ENCODE measurements at regions of chr4 and their contacts with region 1.

Region 1: DNA sequence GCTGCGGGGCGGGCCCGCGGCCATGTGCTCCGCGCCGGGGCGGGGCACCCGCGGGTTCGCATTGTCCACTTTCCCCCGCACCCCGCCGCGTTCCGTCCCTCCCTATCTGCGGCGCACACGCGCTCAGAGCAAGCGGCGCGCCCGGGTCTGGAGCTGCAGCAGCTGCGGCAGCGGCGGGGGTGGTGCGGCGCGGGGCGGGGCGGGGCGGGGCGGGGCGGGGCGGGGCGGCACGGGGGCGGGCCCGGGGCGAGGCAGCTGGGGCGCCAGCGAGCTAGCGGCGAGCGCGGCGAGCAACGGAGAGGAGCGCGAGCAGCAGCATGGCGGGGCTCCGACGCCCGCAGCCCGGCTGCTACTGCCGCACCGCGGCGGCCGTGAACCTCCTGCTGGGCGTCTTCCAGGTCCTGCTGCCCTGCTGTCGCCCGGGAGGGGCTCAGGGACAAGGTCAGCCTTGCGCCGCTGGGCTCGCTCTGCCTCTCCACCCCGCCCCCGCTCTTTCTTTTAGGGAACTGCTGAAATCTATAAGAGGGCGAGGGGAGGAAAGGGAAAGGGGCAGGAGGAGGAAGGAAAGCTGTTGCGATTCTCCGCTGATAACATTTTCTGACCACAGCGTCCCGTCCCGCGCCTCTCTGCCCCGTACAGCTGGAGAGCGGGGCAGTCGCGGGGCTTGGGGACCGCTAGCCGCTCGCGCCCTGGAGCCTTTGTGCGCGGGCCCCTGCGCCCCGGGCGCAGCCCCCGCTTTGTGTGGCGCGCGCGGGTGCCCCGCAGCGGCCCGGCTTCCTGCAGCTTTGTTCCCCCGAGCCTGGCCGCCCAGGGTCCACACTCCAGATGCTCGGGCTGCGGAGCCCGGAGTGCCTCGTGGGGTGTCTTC is at the start of gene TMEM131L:
- DNase-seq: peak; percentile 66 to 81 (median 73)
- H3K4me3 ChIP-seq: peak within 1 kb of the TSS; percentile 79 to 86
- H3K4me3 Mint-ChIP-seq: peak within 1 kb of the TSS; percentile 89 to 99 (median 98)
- H3K27ac ChIP-seq: peak within 1 kb of the TSS; percentile 76
- H3K27ac Mint-ChIP-seq: peak within 1 kb of the TSS; percentile 95 to 100 (median 98)
- H3K4me1 ChIP-seq: peaks cover 37% of the 10 kb centered on the region
- H3K4me1 Mint-ChIP-seq: peaks cover 30 to 60% (median 36%) of the 10 kb centered on the region in 4 donors
- H3K27me3 ChIP-seq: no peaks in the 10 kb centered on the region
- H3K27me3 Mint-ChIP-seq: no peaks in the 10 kb centered on the region
- total RNA-seq, gene TMEM131L: 62.5 to 65.6 TPM

Region 2: GRCh38 chr4:152860051-152860450 is 606.3 kb before region 1 on chr4:
- CTCF ChIA-PET with region 1: no interaction called
- POLR2A ChIA-PET with region 1: no interaction called
- intact Hi-C with region 1: no loop called
- DNase-seq: no peak
- H3K4me3 ChIP-seq: no peak overlapping the region
- H3K4me3 Mint-ChIP-seq: no peak overlapping the region
- H3K27ac ChIP-seq: no peak overlapping the region
- H3K27ac Mint-ChIP-seq: no peak overlapping the region
- H3K4me1 ChIP-seq: no peaks in the 10 kb centered on the region
- H3K4me1 Mint-ChIP-seq: peaks cover 0 to 2% (median 0%) of the 10 kb centered on the region in 4 donors
- H3K27me3 ChIP-seq: no peaks in the 10 kb centered on the region
- H3K27me3 Mint-ChIP-seq: no peaks in the 10 kb centered on the region

Region 3: GRCh38 chr4:153426207-153426885 is 40.0 kb before region 1 on chr4:
- CTCF ChIA-PET with region 1: interaction called, 100 read pairs
- POLR2A ChIA-PET with region 1: interaction called, 19 read pairs
- intact Hi-C with region 1: no loop called
- DNase-seq: peak; percentile 52 to 72 (median 65)
- H3K4me3 ChIP-seq: no peak overlapping the region
- H3K4me3 Mint-ChIP-seq: peak overlapping the region in 7 of 8 donors; percentile 13 to 74 (median 65)
- H3K27ac ChIP-seq: no peak overlapping the region
- H3K27ac Mint-ChIP-seq: peak overlapping the region; percentile 83 to 94 (median 90)
- H3K4me1 ChIP-seq: peaks cover 64% of the 10 kb centered on the region
- H3K4me1 Mint-ChIP-seq: peaks cover 29 to 51% (median 41%) of the 10 kb centered on the region in 4 donors
- H3K27me3 ChIP-seq: no peaks in the 10 kb centered on the region
- H3K27me3 Mint-ChIP-seq: no peaks in the 10 kb centered on the region

Region 4: DNA sequence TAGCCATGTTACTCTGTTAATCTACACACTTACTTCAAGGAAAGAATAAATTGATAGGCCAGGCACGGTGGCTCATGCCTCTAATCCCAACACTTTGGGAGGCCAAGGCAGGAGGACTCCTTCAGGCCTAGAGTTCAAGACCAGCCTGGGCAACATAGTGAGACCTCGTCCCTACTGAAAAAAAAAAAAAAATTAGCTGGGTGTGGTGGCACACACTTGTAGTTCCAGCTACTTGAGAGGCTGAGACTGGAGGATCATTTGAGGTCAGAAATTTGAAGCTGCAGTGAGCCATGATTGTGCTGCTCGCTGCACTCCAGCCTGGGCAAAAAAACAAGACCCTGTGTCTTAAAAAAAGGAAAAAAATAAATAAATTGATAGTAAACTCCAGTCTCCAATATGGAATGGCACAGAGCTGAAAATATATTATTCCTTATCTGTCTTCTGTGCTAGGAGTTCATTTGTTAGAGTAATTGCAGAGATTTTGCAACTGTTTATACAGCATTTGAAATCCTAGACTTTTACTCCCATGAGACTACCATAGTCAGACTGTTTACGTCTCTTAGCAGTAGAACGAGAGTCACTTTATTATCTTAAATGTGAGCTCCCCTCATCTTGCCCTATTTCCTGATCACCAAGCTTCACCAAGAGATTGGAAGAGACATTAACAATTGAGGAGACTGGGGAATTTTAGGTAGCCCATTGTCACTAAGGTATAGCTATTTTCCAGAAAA is 19.0 kb before region 1 on chr4:
- CTCF ChIA-PET with region 1: interaction called, 8 read pairs
- POLR2A ChIA-PET with region 1: interaction called, 26 read pairs
- intact Hi-C with region 1: no loop called
- DNase-seq: no peak
- H3K4me3 ChIP-seq: no peak overlapping the region
- H3K4me3 Mint-ChIP-seq: no peak overlapping the region
- H3K27ac ChIP-seq: no peak overlapping the region
- H3K27ac Mint-ChIP-seq: no peak overlapping the region
- H3K4me1 ChIP-seq: peaks cover 18% of the 10 kb centered on the region
- H3K4me1 Mint-ChIP-seq: peaks cover 12 to 23% (median 15%) of the 10 kb centered on the region in 4 donors
- H3K27me3 ChIP-seq: no peaks in the 10 kb centered on the region
- H3K27me3 Mint-ChIP-seq: no peaks in the 10 kb centered on the region

Region 5: GRCh38 chr4:153488006-153488891 is 21.9 kb after region 1 on chr4:
- CTCF ChIA-PET with region 1: interaction called, 43 read pairs
- POLR2A ChIA-PET with region 1: interaction called, 546 read pairs
- intact Hi-C with region 1: loop called (anchors 1 kb)
- DNase-seq: peak; percentile 81 to 94 (median 82)
- H3K4me3 ChIP-seq: peak overlapping the region; percentile 25 to 54
- H3K4me3 Mint-ChIP-seq: peak overlapping the region; percentile 78 to 92 (median 88)
- H3K27ac ChIP-seq: peak overlapping the region; percentile 88
- H3K27ac Mint-ChIP-seq: peak overlapping the region; percentile 94 to 99 (median 96)
- H3K4me1 ChIP-seq: peaks cover 90% of the 10 kb centered on the region
- H3K4me1 Mint-ChIP-seq: peaks cover 64 to 87% (median 73%) of the 10 kb centered on the region in 4 donors
- H3K27me3 ChIP-seq: no peaks in the 10 kb centered on the region
- H3K27me3 Mint-ChIP-seq: peaks cover 0 to 2% of the 10 kb centered on the region in 2 donors

Region 6: GRCh38 chr4:153521999-153522801 is 55.9 kb after region 1 on chr4:
- CTCF ChIA-PET with region 1: interaction called, 12 read pairs
- POLR2A ChIA-PET with region 1: interaction called, 37 read pairs
- intact Hi-C with region 1: loop called (anchors 1 kb)
- DNase-seq: peak; percentile 74 to 78 (median 75)
- H3K4me3 ChIP-seq: peak overlapping the region in 1 of 2 donors; percentile 41
- H3K4me3 Mint-ChIP-seq: peak overlapping the region; percentile 73 to 87 (median 84)
- H3K27ac ChIP-seq: peak overlapping the region; percentile 67
- H3K27ac Mint-ChIP-seq: peak overlapping the region; percentile 69 to 96 (median 92)
- H3K4me1 ChIP-seq: peaks cover 98% of the 10 kb centered on the region
- H3K4me1 Mint-ChIP-seq: peaks cover 78 to 97% (median 89%) of the 10 kb centered on the region in 4 donors
- H3K27me3 ChIP-seq: no peaks in the 10 kb centered on the region
- H3K27me3 Mint-ChIP-seq: no peaks in the 10 kb centered on the region

Region 7: GRCh38 chr4:153535772-153536513 is 69.6 kb after region 1 on chr4:
- CTCF ChIA-PET with region 1: interaction called, 14 read pairs
- POLR2A ChIA-PET with region 1: interaction called, 43 read pairs
- intact Hi-C with region 1: no loop called
- DNase-seq: peak in 4 of 5 donors; percentile 26 to 51 (median 33)
- H3K4me3 ChIP-seq: no peak overlapping the region
- H3K4me3 Mint-ChIP-seq: peak overlapping the region; percentile 48 to 90 (median 76)
- H3K27ac ChIP-seq: peak overlapping the region; percentile 23
- H3K27ac Mint-ChIP-seq: peak overlapping the region; percentile 90 to 96 (median 94)
- H3K4me1 ChIP-seq: peaks cover 96% of the 10 kb centered on the region
- H3K4me1 Mint-ChIP-seq: peaks cover 59 to 93% (median 80%) of the 10 kb centered on the region in 4 donors
- H3K27me3 ChIP-seq: no peaks in the 10 kb centered on the region
- H3K27me3 Mint-ChIP-seq: no peaks in the 10 kb centered on the region

Region 8: GRCh38 chr4:155170569-155170968 is 1704.3 kb after region 1 on chr4:
- CTCF ChIA-PET with region 1: no interaction called
- POLR2A ChIA-PET with region 1: no interaction called
- intact Hi-C with region 1: no loop called
- DNase-seq: no peak
- H3K4me3 ChIP-seq: no peak overlapping the region
- H3K4me3 Mint-ChIP-seq: no peak overlapping the region
- H3K27ac ChIP-seq: no peak overlapping the region
- H3K27ac Mint-ChIP-seq: no peak overlapping the region
- H3K4me1 ChIP-seq: no peaks in the 10 kb centered on the region
- H3K4me1 Mint-ChIP-seq: no peaks in the 10 kb centered on the region
- H3K27me3 ChIP-seq: no peaks in the 10 kb centered on the region
- H3K27me3 Mint-ChIP-seq: no peaks in the 10 kb centered on the region